CD8-positive, alpha-beta memory T cell (primary cell): ENCODE measurements at regions of chr5 and their contacts with region 1.

Region 1: GRCh38 chr5:151134238-151134637 is 23.3 kb downstream of the ANXA6 start:
- DNase-seq: no peak
- H3K4me3 ChIP-seq: no peak overlapping the region
- H3K4me3 Mint-ChIP-seq: no peak overlapping the region
- H3K27ac ChIP-seq: no peak overlapping the region
- H3K27ac Mint-ChIP-seq: peak overlapping the region in 6 of 8 donors; percentile 6 to 92 (median 62)
- H3K4me1 ChIP-seq: peaks cover 43% of the 10 kb centered on the region
- H3K4me1 Mint-ChIP-seq: peaks cover 46 to 74% (median 74%) of the 10 kb centered on the region in 3 donors
- H3K27me3 ChIP-seq: no peaks in the 10 kb centered on the region
- H3K27me3 Mint-ChIP-seq: no peaks in the 10 kb centered on the region

Region 2: DNA sequence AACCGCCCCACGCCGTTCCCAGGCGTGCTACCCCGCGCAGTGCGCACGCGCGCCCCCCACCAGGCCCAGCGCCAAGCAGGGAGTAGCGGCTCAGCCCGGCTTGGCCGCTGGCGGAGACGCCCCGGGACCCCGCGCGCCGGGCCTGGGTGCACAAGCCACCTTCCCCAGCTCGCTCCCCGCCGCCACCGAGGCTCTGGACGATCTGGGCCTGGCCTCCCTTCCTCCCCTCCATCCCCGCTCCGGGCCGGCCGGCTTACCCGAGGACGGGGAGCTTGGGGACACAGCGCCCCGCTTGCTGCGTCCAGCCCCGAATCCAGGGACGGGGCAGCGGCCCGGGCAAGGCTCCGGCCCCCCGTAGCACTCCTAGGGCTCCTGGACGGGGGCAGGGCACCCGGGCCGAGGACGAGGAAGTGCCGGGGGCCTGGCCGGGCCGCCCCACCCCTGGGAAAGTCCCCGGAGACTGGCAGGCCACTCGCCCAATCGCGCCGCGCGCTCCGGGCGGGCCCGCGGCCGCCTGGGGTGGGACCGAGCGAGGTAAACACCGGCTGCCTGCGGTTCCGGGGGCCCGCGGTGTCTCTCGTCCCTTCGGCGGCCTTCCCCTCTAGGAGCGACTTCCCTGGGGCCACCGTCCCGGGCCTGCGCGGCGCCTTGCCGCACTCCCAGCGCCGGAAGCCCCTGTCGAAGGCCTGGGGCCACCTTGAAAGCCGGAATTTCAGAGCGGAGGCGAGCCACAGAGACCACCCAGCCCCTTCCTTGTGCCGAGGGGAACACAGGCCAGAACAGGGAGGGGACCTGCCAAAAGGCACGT is 53.4 kb before region 1 on chr5 and contains the start of gene TNIP1:
- CTCF ChIA-PET with region 1: no interaction called
- POLR2A ChIA-PET with region 1: no interaction called
- DNase-seq: peak; percentile 90 to 95 (median 93)
- H3K4me3 ChIP-seq: peak within 1 kb of the TSS; percentile 93
- H3K4me3 Mint-ChIP-seq: peak within 1 kb of the TSS; percentile 83 to 96 (median 90)
- H3K27ac ChIP-seq: peak within 1 kb of the TSS; percentile 97
- H3K27ac Mint-ChIP-seq: peak within 1 kb of the TSS; percentile 82 to 99 (median 96)
- H3K4me1 ChIP-seq: peaks cover 84% of the 10 kb centered on the region
- H3K4me1 Mint-ChIP-seq: peaks cover 75 to 91% (median 86%) of the 10 kb centered on the region in 3 donors
- H3K27me3 ChIP-seq: no peaks in the 10 kb centered on the region
- H3K27me3 Mint-ChIP-seq: no peaks in the 10 kb centered on the region
- total RNA-seq, gene TNIP1: 212 to 213 TPM

Region 3: DNA sequence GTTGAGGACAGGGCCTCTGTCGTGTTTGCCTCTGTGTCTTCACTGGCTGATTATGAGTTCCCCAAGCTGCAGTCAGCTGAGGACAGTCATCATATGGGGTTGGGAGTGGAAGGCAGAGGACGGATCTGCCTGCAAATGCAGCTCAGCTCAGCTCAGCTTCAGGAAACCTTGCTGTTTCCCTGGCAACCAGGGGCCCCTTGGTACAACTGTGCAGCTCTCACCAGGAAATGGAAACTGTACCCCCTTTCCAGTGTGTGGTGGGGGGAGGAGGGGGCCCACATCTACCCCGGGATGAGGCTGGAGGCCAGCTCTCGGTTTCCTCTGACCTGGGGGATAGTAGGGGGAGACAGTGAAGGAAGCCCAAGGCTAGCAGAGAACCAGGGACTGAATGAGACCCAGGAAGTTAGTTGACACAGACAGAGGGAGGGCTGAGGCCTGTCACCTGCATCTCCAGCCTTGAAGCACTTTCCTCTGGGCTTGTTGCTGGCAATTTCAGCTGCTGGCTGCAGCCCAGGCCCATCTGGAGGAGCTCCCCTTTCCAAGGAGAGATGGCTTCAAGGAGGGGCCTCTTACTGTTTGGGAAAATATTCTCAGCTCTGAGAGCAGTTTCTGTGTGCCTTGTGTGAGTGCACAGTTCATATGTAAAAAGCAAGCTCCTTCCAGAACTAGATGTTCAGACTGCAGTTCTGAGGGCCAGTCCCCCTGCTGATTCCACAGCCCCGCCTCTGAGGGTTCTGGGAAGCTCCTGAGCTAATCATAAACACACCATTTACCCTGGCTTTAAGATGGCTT is 16.4 kb after region 1 on chr5:
- CTCF ChIA-PET with region 1: interaction called, 29 read pairs
- POLR2A ChIA-PET with region 1: interaction called, 10 read pairs
- DNase-seq: peak; percentile 58 to 91 (median 77)
- H3K4me3 ChIP-seq: peak overlapping the region; percentile 35
- H3K4me3 Mint-ChIP-seq: peak overlapping the region; percentile 51 to 85 (median 74)
- H3K27ac ChIP-seq: peak overlapping the region; percentile 64
- H3K27ac Mint-ChIP-seq: peak overlapping the region; percentile 92 to 99 (median 97)
- H3K4me1 ChIP-seq: peaks cover 98% of the 10 kb centered on the region
- H3K4me1 Mint-ChIP-seq: peaks cover 97 to 100% (median 99%) of the 10 kb centered on the region in 3 donors
- H3K27me3 ChIP-seq: no peaks in the 10 kb centered on the region
- H3K27me3 Mint-ChIP-seq: no peaks in the 10 kb centered on the region

Region 4: DNA sequence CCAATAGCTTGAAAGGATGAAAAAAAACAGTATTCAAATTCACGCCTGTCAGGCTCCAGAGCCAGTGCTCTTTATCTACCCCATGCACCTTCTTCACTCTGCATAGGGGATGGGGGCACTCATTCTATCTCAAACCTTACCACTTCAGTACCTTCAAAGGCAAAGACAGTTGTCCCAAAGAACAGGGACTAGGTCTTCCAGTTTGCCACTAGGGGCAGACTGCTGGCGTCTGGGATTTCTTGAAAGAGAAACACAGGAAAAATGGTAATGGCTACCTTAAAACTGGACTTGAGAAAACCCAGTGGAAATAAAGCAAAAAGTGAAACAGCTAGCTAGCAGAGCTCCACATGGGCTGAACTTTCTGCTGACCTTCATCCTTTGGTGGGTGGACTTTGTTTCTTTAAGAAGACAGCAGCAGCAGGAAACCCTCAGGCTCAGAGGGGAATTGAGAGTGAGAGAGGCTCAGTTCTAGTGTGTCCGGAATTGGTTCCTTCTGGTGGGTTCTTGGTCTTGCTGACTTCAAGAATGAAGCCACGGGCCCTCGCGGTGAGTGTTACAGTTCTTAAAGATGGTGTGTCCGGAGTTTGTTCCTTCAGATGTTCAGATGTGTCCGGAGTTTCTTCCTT is 272.2 kb after region 1 on chr5:
- CTCF ChIA-PET with region 1: no interaction called
- POLR2A ChIA-PET with region 1: no interaction called
- DNase-seq: no peak
- H3K4me3 ChIP-seq: no peak overlapping the region
- H3K4me3 Mint-ChIP-seq: peak overlapping the region in 1 of 7 donors; percentile 11
- H3K27ac ChIP-seq: no peak overlapping the region
- H3K27ac Mint-ChIP-seq: no peak overlapping the region
- H3K4me1 ChIP-seq: no peaks in the 10 kb centered on the region
- H3K4me1 Mint-ChIP-seq: no peaks in the 10 kb centered on the region
- H3K27me3 ChIP-seq: peaks cover 4% of the 10 kb centered on the region
- H3K27me3 Mint-ChIP-seq: peaks cover 36 to 80% of the 10 kb centered on the region in 2 donors